CD8-positive, alpha-beta memory T cell (primary cell): ENCODE measurements at regions of chr17 and their contacts with region 1.

Region 1: GRCh38 chr17:40113110-40113906 is 8.5 kb upstream of the MSL1 start:
- DNase-seq: peak; percentile 84 to 95 (median 90)
- H3K4me3 ChIP-seq: peak overlapping the region; percentile 58
- H3K4me3 Mint-ChIP-seq: peak overlapping the region; percentile 65 to 92 (median 84)
- H3K27ac ChIP-seq: peak overlapping the region; percentile 58
- H3K27ac Mint-ChIP-seq: peak overlapping the region; percentile 66 to 95 (median 86)
- H3K4me1 ChIP-seq: peaks cover 54% of the 10 kb centered on the region
- H3K4me1 Mint-ChIP-seq: peaks cover 45 to 55% (median 54%) of the 10 kb centered on the region in 3 donors
- H3K27me3 ChIP-seq: no peaks in the 10 kb centered on the region
- H3K27me3 Mint-ChIP-seq: peaks cover 0 to 3% of the 10 kb centered on the region in 2 donors

Region 2: GRCh38 chr17:39863918-39864746 is 249.2 kb before region 1 on chr17 and contains the start of gene IKZF3:
- CTCF ChIA-PET with region 1: no interaction called
- POLR2A ChIA-PET with region 1: no interaction called
- DNase-seq: peak; percentile 76 to 89 (median 83)
- H3K4me3 ChIP-seq: peak within 1 kb of the TSS; percentile 86
- H3K4me3 Mint-ChIP-seq: peak within 1 kb of the TSS; percentile 84 to 99 (median 93)
- H3K27ac ChIP-seq: peak within 1 kb of the TSS; percentile 95
- H3K27ac Mint-ChIP-seq: peak within 1 kb of the TSS; percentile 96 to 99 (median 98)
- H3K4me1 ChIP-seq: peaks cover 52% of the 10 kb centered on the region
- H3K4me1 Mint-ChIP-seq: peaks cover 61 to 86% (median 70%) of the 10 kb centered on the region in 3 donors
- H3K27me3 ChIP-seq: no peaks in the 10 kb centered on the region
- H3K27me3 Mint-ChIP-seq: peaks cover 0 to 3% of the 10 kb centered on the region in 2 donors
- total RNA-seq, gene IKZF3: 119 to 126 TPM

Region 3: GRCh38 chr17:40062329-40063186 is 50.8 kb before region 1 on chr17 and contains the start of gene THRA:
- CTCF ChIA-PET with region 1: interaction called, 159 read pairs
- POLR2A ChIA-PET with region 1: interaction called, 10 read pairs
- DNase-seq: peak; percentile 64 to 81 (median 70)
- H3K4me3 ChIP-seq: peak within 1 kb of the TSS; percentile 81
- H3K4me3 Mint-ChIP-seq: peak within 1 kb of the TSS; percentile 88 to 97 (median 91)
- H3K27ac ChIP-seq: peak within 1 kb of the TSS; percentile 73
- H3K27ac Mint-ChIP-seq: peak within 1 kb of the TSS; percentile 80 to 97 (median 90)
- H3K4me1 ChIP-seq: peaks cover 46% of the 10 kb centered on the region
- H3K4me1 Mint-ChIP-seq: peaks cover 37 to 49% (median 41%) of the 10 kb centered on the region in 3 donors
- H3K27me3 ChIP-seq: no peaks in the 10 kb centered on the region
- H3K27me3 Mint-ChIP-seq: peaks cover 0 to 2% of the 10 kb centered on the region in 2 donors
- total RNA-seq, gene THRA: 12.6 to 13.2 TPM

Region 4: DNA sequence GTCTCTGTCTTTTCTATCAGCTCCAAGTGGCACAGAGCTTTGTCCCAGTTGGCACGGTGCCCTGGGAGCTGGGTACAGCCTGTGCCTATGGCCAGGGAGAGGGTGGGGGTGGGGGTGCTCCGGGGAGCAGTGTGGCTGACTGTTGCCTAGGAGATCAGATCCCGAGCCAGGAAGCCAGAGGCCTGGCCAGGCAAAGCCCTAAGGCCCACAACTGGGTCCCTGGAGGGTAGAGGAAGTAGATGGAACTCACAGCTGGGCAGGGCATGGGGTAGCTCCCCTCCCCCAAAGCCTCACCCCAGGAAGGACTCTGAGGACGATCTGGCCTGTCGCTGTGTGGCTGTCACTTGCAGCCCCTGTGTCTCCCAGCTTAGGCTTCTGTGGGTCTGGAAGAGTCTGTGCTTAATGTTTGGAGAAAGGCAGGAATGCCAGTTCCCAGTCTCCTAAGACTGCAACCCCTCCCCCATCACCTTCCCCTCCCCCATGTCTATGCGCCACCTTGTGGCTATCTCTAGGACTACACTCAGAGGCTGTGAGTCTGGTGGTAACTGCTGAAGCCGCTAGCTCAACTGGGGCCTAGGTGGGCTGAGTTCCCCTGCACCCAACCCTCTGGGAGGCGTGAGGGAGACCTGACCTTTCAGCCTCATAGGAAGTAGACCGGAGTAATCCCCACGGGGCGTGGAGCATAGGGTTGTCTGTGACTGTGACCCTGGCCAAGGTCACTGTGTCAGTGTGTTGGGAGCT is 37.9 kb before region 1 on chr17:
- CTCF ChIA-PET with region 1: interaction called, 67 read pairs
- POLR2A ChIA-PET with region 1: interaction called, 4 read pairs
- DNase-seq: peak; percentile 54 to 79 (median 56)
- H3K4me3 ChIP-seq: no peak overlapping the region
- H3K4me3 Mint-ChIP-seq: peak overlapping the region in 1 of 7 donors; percentile 73
- H3K27ac ChIP-seq: peak overlapping the region; percentile 6
- H3K27ac Mint-ChIP-seq: peak overlapping the region in 5 of 8 donors; percentile 62 to 87 (median 79)
- H3K4me1 ChIP-seq: peaks cover 38% of the 10 kb centered on the region
- H3K4me1 Mint-ChIP-seq: peaks cover 30 to 53% (median 38%) of the 10 kb centered on the region in 3 donors
- H3K27me3 ChIP-seq: no peaks in the 10 kb centered on the region
- H3K27me3 Mint-ChIP-seq: peaks cover 0 to 3% of the 10 kb centered on the region in 2 donors

Region 5: GRCh38 chr17:40091691-40092397 is 21.5 kb before region 1 on chr17:
- CTCF ChIA-PET with region 1: interaction called, 191 read pairs
- POLR2A ChIA-PET with region 1: interaction called, 9 read pairs
- DNase-seq: no peak
- H3K4me3 ChIP-seq: no peak overlapping the region
- H3K4me3 Mint-ChIP-seq: no peak overlapping the region
- H3K27ac ChIP-seq: no peak overlapping the region
- H3K27ac Mint-ChIP-seq: no peak overlapping the region
- H3K4me1 ChIP-seq: peaks cover 31% of the 10 kb centered on the region
- H3K4me1 Mint-ChIP-seq: peaks cover 27 to 42% (median 39%) of the 10 kb centered on the region in 3 donors
- H3K27me3 ChIP-seq: no peaks in the 10 kb centered on the region
- H3K27me3 Mint-ChIP-seq: peaks cover 0 to 3% of the 10 kb centered on the region in 2 donors

Region 6: DNA sequence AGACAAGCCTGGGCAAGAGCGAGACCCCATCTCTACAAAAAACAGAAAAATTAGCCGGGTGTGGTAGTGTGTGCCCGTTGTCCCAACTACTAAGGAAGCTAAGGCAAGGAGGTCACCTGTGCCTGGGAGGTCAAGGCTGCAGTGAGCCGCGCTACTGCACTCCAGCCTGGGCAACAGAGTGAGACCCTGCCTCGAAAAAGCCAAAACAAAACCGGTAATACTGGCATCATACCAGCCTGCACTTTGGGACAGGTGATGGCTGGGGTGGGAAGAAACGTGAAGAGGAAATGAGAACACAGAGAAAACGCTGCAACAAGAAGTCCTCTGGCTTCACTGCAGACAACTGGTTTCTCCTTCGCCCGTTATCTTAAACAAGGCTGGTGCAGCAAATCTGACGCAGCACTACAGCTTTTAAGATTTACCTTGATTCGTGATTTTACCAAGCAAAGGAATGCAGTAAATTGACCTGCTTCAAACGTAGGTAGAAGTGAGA is 26.3 kb after region 1 on chr17:
- CTCF ChIA-PET with region 1: interaction called, 57 read pairs
- POLR2A ChIA-PET with region 1: interaction called, 15 read pairs
- DNase-seq: no peak
- H3K4me3 ChIP-seq: peak overlapping the region; percentile 82
- H3K4me3 Mint-ChIP-seq: peak overlapping the region; percentile 90 to 95 (median 95)
- H3K27ac ChIP-seq: peak overlapping the region; percentile 95
- H3K27ac Mint-ChIP-seq: peak overlapping the region; percentile 97 to 100 (median 98)
- H3K4me1 ChIP-seq: peaks cover 26% of the 10 kb centered on the region
- H3K4me1 Mint-ChIP-seq: peaks cover 29 to 50% (median 37%) of the 10 kb centered on the region in 3 donors
- H3K27me3 ChIP-seq: no peaks in the 10 kb centered on the region
- H3K27me3 Mint-ChIP-seq: peaks cover 0 to 6% of the 10 kb centered on the region in 2 donors

Region 7: DNA sequence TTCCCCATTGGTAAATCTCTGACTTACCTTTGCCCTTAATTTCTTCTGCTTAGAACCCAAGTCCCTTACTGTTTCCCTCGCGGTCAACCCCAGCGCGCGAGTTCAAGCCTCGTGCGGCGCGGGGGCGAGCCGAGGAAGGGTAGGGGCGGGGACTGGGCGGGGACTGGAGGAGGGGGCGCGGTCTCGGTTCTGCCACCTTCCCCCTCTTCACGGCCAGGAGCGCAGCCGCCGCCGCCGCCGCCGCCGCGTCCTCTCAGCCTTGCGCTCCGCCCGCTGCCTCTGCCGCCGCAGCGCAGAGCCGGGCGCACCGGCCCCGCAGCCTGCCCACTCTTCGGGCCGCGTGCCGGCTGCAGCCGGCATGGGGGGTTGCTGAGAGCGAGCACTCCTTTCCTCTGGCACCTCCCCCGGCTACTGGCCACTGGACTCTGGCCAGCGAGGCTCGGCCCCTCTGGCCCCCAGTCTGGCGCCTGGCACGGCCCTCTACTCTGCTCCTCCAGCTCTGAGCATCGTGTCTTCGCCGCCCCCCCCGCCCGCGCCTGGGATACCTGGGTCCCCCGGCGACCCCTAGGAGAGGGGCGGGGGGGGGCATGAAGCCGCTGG is 64.1 kb after region 1 on chr17 and contains the start of gene RAPGEFL1:
- CTCF ChIA-PET with region 1: interaction called, 12 read pairs
- POLR2A ChIA-PET with region 1: interaction called, 8 read pairs
- DNase-seq: peak; percentile 68 to 84 (median 74)
- H3K4me3 ChIP-seq: no peak within 1 kb of the TSS
- H3K4me3 Mint-ChIP-seq: peak within 1 kb of the TSS; percentile 17 to 76 (median 62)
- H3K27ac ChIP-seq: no peak within 1 kb of the TSS
- H3K27ac Mint-ChIP-seq: peak within 1 kb of the TSS in 4 of 8 donors; percentile 45 to 87 (median 68)
- H3K4me1 ChIP-seq: peaks cover 10% of the 10 kb centered on the region
- H3K4me1 Mint-ChIP-seq: peaks cover 7 to 8% (median 8%) of the 10 kb centered on the region in 3 donors
- H3K27me3 ChIP-seq: no peaks in the 10 kb centered on the region
- H3K27me3 Mint-ChIP-seq: no peaks in the 10 kb centered on the region
- total RNA-seq, gene RAPGEFL1: 5.7 to 6.3 TPM

Region 8: GRCh38 chr17:40203131-40203530 is 89.8 kb after region 1 on chr17:
- CTCF ChIA-PET with region 1: interaction called, 13 read pairs
- POLR2A ChIA-PET with region 1: no interaction called
- DNase-seq: no peak
- H3K4me3 ChIP-seq: no peak overlapping the region
- H3K4me3 Mint-ChIP-seq: no peak overlapping the region
- H3K27ac ChIP-seq: no peak overlapping the region
- H3K27ac Mint-ChIP-seq: no peak overlapping the region
- H3K4me1 ChIP-seq: no peaks in the 10 kb centered on the region
- H3K4me1 Mint-ChIP-seq: peaks cover 0 to 5% (median 3%) of the 10 kb centered on the region in 3 donors
- H3K27me3 ChIP-seq: no peaks in the 10 kb centered on the region
- H3K27me3 Mint-ChIP-seq: peaks cover 7 to 9% of the 10 kb centered on the region in 2 donors

Region 9: GRCh38 chr17:40331743-40332641 is 218.7 kb after region 1 on chr17:
- CTCF ChIA-PET with region 1: no interaction called
- POLR2A ChIA-PET with region 1: no interaction called
- DNase-seq: no peak
- H3K4me3 ChIP-seq: no peak overlapping the region
- H3K4me3 Mint-ChIP-seq: peak overlapping the region in 3 of 7 donors; percentile 26 to 41 (median 35)
- H3K27ac ChIP-seq: no peak overlapping the region
- H3K27ac Mint-ChIP-seq: peak overlapping the region in 5 of 8 donors; percentile 71 to 98 (median 79)
- H3K4me1 ChIP-seq: peaks cover 77% of the 10 kb centered on the region
- H3K4me1 Mint-ChIP-seq: peaks cover 65 to 85% (median 76%) of the 10 kb centered on the region in 3 donors
- H3K27me3 ChIP-seq: no peaks in the 10 kb centered on the region
- H3K27me3 Mint-ChIP-seq: peaks cover 0 to 3% of the 10 kb centered on the region in 2 donors